ENCODE measurements at regions of chr3 and their contacts with region 1.

Region 1: DNA sequence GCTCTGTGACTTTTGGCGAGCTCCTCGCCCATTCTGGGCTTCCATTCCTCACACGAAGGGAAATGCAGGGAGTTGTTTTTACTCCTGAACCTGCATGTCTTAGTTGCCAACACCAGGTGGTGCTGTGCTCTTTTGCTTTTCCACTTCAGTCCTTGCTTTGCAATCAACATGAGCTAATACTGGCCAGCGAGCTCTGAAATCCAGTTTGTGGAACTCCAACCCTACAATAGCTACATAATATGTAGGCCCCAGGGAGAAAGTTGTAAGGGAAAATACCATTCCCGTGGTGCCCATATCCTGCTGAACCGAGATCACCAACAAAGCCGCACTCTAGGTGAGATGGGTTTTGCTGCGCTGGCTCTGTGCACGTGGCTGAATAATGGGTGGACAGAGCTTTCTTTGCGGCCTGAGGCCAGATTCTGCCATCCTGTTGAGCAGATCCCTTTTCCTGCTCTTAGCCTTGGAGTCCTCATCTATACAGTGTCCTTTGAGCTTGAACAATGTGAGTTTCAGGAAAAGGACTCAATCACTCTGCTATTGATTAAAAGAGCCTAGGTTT is 25.0 kb downstream of the LSM3 start:
- DNase-seq: no peak
- ATAC-seq: peak; percentile 74
- H3K4me3 Mint-ChIP-seq: no peak overlapping the region
- H3K27ac Mint-ChIP-seq: peak overlapping the region; percentile 10
- H3K4me1 Mint-ChIP-seq: peaks cover 5% of the 10 kb centered on the region
- H3K27me3 Mint-ChIP-seq: no peaks in the 10 kb centered on the region
- CTCF ChIP-seq: peak; percentile 25

Region 2: DNA sequence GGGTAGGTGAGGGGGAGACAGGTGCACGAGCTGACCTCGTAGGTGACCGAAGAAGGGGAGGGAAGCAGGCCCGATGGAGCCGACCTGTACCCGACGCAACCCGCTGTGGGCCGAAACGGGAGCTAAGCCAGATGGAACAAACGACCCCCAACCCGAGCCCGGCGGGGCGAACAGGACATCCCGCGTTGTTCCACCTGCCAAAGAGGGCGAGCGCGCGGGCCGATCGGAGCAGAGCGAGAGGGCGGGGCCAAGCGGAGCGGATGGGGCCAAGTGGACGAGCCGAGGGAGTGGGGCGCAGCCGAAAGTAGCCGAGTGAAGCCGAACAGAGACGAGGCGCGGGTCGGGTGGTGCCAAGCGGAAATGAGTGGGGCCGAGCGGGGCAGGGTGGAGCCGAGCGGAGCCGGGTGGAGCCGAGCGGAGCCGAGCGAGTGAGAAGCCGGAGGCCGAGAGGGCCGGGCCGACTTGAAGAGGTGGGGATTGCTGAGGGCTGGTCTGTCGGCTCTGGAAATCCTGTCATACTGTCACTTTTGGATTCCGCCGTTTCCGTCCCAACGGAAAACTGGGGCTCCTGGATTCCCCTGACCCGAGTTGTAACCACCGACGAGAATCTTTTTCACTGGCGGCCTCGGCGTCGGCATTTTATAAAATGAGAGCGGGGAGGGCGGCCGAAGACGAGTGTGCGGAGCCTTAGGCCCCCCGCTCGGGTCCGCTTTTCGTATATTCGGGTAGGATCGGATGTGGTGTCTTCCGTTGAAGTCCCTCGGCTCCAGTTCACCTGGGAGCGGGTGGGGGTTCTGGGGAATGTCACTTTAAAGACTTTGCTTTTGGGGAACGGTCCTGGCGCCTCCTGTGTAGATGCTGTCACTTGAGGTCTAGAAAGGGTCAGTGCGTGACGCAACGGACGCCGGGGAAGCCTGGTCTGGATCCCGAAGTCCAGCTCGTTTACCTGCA is 308.2 kb before region 1 on chr3:
- CTCF ChIA-PET with region 1: interaction called, 10 read pairs
- POLR2A ChIA-PET with region 1: no interaction called
- intact Hi-C with region 1: no loop called
- DNase-seq: peak; percentile 86
- ATAC-seq: peak; percentile 99
- H3K4me3 Mint-ChIP-seq: peak overlapping the region; percentile 89
- H3K27ac Mint-ChIP-seq: peak overlapping the region; percentile 78
- H3K4me1 Mint-ChIP-seq: peaks cover 41% of the 10 kb centered on the region
- H3K27me3 Mint-ChIP-seq: peaks cover 5% of the 10 kb centered on the region
- CTCF ChIP-seq: no peak

Region 3: DNA sequence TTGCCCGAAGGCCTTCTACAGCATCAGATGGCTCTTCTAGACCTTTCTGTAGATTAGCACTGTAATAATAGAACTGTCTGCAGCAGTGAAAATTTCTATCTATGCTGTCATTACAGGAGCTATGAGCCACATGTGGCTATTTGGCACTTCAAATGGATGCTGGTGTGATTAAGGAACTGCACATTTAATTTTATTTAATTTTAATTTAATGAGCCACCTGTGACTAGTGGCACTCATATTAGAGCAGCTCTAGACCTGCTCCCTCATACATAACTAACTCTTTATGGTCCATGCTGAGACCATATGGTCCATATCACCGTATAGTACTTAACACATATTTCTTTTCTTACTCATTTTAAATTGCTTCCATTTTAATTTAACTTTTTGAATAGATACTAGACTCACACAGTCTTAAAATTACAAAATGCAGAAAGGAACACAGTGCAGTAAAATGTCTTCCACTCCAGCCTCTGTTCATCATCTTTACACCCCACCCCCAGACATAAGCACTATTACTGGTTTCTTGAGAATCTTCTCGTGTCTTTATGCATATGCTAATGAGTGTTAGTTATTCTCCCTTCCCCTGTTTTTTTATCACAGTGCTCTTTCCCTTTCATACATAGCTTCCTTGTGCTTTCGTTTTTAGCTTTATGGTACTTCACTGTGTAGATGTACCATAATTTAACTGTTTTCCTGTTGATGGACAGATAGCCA is 15.4 kb before region 1 on chr3:
- CTCF ChIA-PET with region 1: interaction called, 13 read pairs
- POLR2A ChIA-PET with region 1: interaction called, 3 read pairs
- intact Hi-C with region 1: no loop called
- DNase-seq: no peak
- ATAC-seq: no peak
- H3K4me3 Mint-ChIP-seq: no peak overlapping the region
- H3K27ac Mint-ChIP-seq: no peak overlapping the region
- H3K4me1 Mint-ChIP-seq: peaks cover 28% of the 10 kb centered on the region
- H3K27me3 Mint-ChIP-seq: no peaks in the 10 kb centered on the region
- CTCF ChIP-seq: no peak

Region 4: GRCh38 chr3:14261229-14261628 is 57.6 kb after region 1 on chr3:
- CTCF ChIA-PET with region 1: interaction called, 8 read pairs
- POLR2A ChIA-PET with region 1: no interaction called
- intact Hi-C with region 1: loop called (anchors 1 kb)
- DNase-seq: peak; percentile 67
- ATAC-seq: peak; percentile 58
- H3K4me3 Mint-ChIP-seq: no peak overlapping the region
- H3K27ac Mint-ChIP-seq: no peak overlapping the region
- H3K4me1 Mint-ChIP-seq: no peaks in the 10 kb centered on the region
- H3K27me3 Mint-ChIP-seq: peaks cover 10% of the 10 kb centered on the region
- CTCF ChIP-seq: peak; percentile 68

Region 5: GRCh38 chr3:14548321-14548729 is 344.7 kb after region 1 on chr3:
- CTCF ChIA-PET with region 1: interaction called, 12 read pairs
- POLR2A ChIA-PET with region 1: no interaction called
- intact Hi-C with region 1: loop called (anchors 1 kb)
- DNase-seq: no peak
- ATAC-seq: peak; percentile 47
- H3K4me3 Mint-ChIP-seq: no peak overlapping the region
- H3K27ac Mint-ChIP-seq: no peak overlapping the region
- H3K4me1 Mint-ChIP-seq: no peaks in the 10 kb centered on the region
- H3K27me3 Mint-ChIP-seq: peaks cover 27% of the 10 kb centered on the region
- CTCF ChIP-seq: no peak

Measured in activated B cell treated with CpG ODN at 0.5 μM for 24 hours (primary cell).